MCF 10A (cell line): ENCODE measurements at regions of chr1 and their contacts with region 1.

Region 1: GRCh38 chr1:203267347-203267846 is 37.9 kb upstream of the BTG2 start:
- DNase-seq: peak; percentile 98
- H3K4me3 Mint-ChIP-seq: peak overlapping the region; percentile 77
- H3K27ac Mint-ChIP-seq: no peak overlapping the region
- H3K4me1 Mint-ChIP-seq: peaks cover 12% of the 10 kb centered on the region
- H3K27me3 Mint-ChIP-seq: peaks cover 14% of the 10 kb centered on the region
- CTCF ChIP-seq: peak; percentile 99

Region 2: GRCh38 chr1:203006948-203007871 is 260.2 kb before region 1 on chr1 and contains the start of gene TMEM183A:
- CTCF ChIA-PET with region 1: interaction called, 4 read pairs
- POLR2A ChIA-PET with region 1: interaction called, 10 read pairs
- intact Hi-C with region 1: no loop called
- DNase-seq: peak; percentile 100
- H3K4me3 Mint-ChIP-seq: peak within 1 kb of the TSS; percentile 99
- H3K27ac Mint-ChIP-seq: peak within 1 kb of the TSS; percentile 98
- H3K4me1 Mint-ChIP-seq: peaks cover 24% of the 10 kb centered on the region
- H3K27me3 Mint-ChIP-seq: no peaks in the 10 kb centered on the region
- CTCF ChIP-seq: no peak
- total RNA-seq, gene TMEM183A: 104 and 108 TPM in 2 replicates

Region 3: DNA sequence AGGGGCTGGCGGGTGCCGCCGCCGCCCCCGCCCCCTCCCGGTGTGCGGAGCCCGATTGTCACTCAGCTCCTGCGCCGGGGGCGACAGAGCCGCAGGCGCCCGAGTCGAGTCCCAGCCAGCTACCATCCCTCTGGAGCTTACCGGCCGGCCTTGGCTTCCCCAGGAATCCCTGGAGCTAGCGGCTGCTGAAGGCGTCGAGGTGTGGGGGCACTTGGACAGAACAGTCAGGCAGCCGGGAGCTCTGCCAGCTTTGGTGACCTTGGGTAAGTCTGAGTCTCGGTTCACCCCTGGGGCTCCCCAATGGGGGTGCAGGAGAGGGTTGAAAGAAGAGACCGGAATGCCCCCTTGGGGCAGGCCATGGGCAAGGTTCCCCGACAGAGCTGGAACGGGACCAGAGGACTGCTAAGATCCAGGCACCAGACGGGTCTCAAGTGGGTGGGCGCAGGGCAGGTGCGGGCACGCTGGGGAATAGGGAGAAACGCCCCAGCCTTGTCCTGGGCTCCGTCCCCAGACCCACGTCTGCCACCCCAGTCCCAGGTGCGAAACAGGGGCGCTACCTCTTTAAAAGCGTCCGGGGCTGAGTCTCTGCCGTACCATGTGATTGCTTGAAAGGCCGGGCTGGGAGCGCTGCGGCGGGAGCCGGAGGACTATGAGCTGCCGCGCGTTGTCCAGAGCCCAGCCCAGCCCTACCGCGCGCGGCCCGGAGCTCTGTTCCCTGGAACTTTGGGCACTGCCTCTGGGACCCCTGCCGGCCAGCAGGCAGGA is 139.5 kb before region 1 on chr1 and contains the start of gene ADORA1:
- CTCF ChIA-PET with region 1: interaction called, 17 read pairs
- POLR2A ChIA-PET with region 1: no interaction called
- intact Hi-C with region 1: no loop called
- DNase-seq: peak; percentile 87
- H3K4me3 Mint-ChIP-seq: peak within 1 kb of the TSS; percentile 72
- H3K27ac Mint-ChIP-seq: peak within 1 kb of the TSS; percentile 21
- H3K4me1 Mint-ChIP-seq: peaks cover 18% of the 10 kb centered on the region
- H3K27me3 Mint-ChIP-seq: peaks cover 13% of the 10 kb centered on the region
- CTCF ChIP-seq: no peak
- total RNA-seq, gene ADORA1: 0.26 and 0.34 TPM in 2 replicates

Region 4: GRCh38 chr1:203224716-203225470 is 42.5 kb before region 1 on chr1:
- CTCF ChIA-PET with region 1: interaction called, 159 read pairs
- POLR2A ChIA-PET with region 1: no interaction called
- intact Hi-C with region 1: no loop called
- DNase-seq: no peak
- H3K4me3 Mint-ChIP-seq: no peak overlapping the region
- H3K27ac Mint-ChIP-seq: no peak overlapping the region
- H3K4me1 Mint-ChIP-seq: no peaks in the 10 kb centered on the region
- H3K27me3 Mint-ChIP-seq: peaks cover 72% of the 10 kb centered on the region
- CTCF ChIP-seq: no peak

Region 5: DNA sequence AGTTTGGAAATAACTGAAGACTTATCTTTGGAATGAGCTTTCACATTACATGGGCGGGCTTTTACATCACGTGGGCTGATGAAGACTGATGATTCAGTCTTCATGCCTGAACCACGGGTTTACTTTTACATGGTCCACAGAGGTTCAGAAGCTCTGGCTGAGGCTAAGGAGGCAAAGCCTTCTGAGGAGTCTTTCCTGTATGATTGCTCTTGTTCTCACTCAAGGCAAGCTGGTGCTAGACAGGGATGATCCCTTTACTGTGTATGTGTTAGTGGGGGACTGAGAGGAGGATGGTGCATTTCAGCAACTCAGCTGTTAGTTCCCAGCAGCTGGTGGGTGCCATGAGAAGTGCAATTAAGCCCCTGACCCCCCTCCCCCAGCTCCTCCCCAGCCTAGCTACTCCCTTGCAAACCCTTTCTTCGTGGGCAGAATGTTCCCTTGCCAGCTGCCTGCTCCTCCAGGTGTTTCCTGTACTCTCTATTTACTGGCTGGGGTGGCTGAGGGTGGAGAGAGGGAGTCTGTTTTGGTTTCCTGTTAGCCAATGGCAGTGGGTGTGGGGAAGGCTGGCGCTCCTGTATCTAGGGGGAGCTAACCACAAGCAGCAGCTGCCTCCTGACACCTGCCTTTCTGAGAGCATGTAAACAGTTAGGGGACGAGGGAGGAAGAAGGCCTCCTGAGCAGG is 53.3 kb after region 1 on chr1:
- CTCF ChIA-PET with region 1: interaction called, 187 read pairs
- POLR2A ChIA-PET with region 1: interaction called, 4 read pairs
- intact Hi-C with region 1: no loop called
- DNase-seq: peak; percentile 51
- H3K4me3 Mint-ChIP-seq: no peak overlapping the region
- H3K27ac Mint-ChIP-seq: no peak overlapping the region
- H3K4me1 Mint-ChIP-seq: peaks cover 20% of the 10 kb centered on the region
- H3K27me3 Mint-ChIP-seq: peaks cover 49% of the 10 kb centered on the region
- CTCF ChIP-seq: no peak

Region 6: GRCh38 chr1:203486618-203487370 is 219.4 kb after region 1 on chr1:
- CTCF ChIA-PET with region 1: interaction called, 175 read pairs
- POLR2A ChIA-PET with region 1: interaction called, 3 read pairs
- intact Hi-C with region 1: no loop called
- DNase-seq: no peak
- H3K4me3 Mint-ChIP-seq: peak overlapping the region; percentile 66
- H3K27ac Mint-ChIP-seq: peak overlapping the region; percentile 26
- H3K4me1 Mint-ChIP-seq: peaks cover 6% of the 10 kb centered on the region
- H3K27me3 Mint-ChIP-seq: peaks cover 7% of the 10 kb centered on the region
- CTCF ChIP-seq: no peak